Mammary epithelial cell (primary cell): ENCODE measurements at regions of chr19 and their contacts with region 1.

Region 1: DNA sequence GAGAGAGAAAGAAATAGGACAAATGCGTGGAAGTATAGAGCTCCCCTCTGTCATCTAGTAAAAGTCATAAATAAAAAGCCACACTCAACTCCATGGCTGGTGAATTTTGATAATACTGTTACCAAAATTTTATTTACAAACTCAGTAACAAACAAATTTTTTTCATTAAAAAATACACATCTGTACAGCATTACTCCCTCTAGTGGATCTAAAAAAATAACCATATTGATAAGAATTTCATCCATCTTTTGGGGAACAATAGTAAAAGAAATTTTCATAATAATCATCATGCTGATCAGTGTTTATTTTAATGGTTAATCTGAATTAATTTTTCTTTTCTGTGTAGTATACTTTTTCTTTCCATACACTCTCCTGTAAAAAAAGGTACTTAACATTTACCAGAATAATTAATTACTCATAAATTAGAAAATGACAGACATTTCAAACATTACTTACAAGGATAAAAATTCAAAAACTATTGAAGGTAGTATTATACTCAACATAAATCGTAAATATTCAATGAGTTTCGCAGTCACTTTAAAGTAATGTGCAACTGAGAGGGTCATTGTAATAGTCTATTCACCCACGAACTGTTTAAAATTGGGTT is 173.5 kb upstream of the LSM14A start:
- DNase-seq: no peak
- H3K4me3 ChIP-seq: no peak overlapping the region
- H3K27ac ChIP-seq: no peak overlapping the region
- H3K4me1 ChIP-seq: no peaks in the 10 kb centered on the region
- H3K27me3 ChIP-seq: no peaks in the 10 kb centered on the region
- CTCF ChIP-seq: peak; percentile 21 to 41

Region 2: DNA sequence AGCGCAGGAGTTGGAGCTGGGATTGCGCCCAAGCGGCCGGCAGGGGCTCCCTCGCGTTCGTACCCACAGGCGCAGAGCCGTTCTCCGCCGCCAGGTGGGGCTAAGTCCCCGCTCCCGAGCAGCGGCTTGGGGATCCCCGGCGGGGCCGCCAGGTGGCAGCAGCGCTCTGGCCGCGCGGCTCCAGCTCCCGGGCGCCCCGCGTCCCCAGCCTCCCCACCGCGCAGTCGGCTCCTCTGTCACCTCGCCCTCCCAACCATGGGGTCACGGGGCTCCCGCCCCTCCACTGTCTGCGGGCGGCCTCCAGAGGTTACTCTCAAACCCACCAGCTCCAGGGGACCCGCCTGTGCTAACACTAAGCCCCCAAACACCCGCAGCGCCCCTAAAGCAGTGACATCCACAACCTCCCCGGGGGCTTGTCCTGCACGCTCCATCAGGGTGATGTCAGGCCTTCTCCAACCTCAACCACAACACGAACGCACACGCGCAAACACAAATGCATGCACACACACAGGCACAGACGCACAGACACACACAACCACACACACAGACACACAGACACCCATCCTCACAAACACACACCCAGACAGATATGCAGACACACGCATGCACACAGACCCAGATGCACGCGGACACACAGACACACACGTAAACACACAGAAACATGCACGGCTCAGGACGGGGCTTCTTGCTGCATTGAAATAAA is 220.6 kb before region 1 on chr19:
- CTCF ChIA-PET with region 1: interaction called, 9 read pairs
- dilution Hi-C with region 1: no loop called
- in situ Hi-C with region 1: loop called (anchors 5 kb)
- intact Hi-C with region 1: loop called (anchors 1 kb)
- DNase-seq: peak; percentile 52
- H3K4me3 ChIP-seq: peak overlapping the region in 1 of 3 experiments; percentile 14
- H3K27ac ChIP-seq: no peak overlapping the region
- H3K4me1 ChIP-seq: peaks cover 10% of the 10 kb centered on the region
- H3K27me3 ChIP-seq: no peaks in the 10 kb centered on the region
- CTCF ChIP-seq: peak; percentile 99 to 100

Region 3: GRCh38 chr19:33795370-33796163 is 203.3 kb before region 1 on chr19:
- CTCF ChIA-PET with region 1: interaction called, 11 read pairs
- dilution Hi-C with region 1: no loop called
- in situ Hi-C with region 1: no loop called
- intact Hi-C with region 1: loop called (anchors 1 kb)
- DNase-seq: peak; percentile 75
- H3K4me3 ChIP-seq: peak overlapping the region; percentile 71 to 85 (median 81)
- H3K27ac ChIP-seq: peak overlapping the region; percentile 65
- H3K4me1 ChIP-seq: peaks cover 15% of the 10 kb centered on the region
- H3K27me3 ChIP-seq: no peaks in the 10 kb centered on the region
- CTCF ChIP-seq: peak; percentile 38 to 73

Region 4: DNA sequence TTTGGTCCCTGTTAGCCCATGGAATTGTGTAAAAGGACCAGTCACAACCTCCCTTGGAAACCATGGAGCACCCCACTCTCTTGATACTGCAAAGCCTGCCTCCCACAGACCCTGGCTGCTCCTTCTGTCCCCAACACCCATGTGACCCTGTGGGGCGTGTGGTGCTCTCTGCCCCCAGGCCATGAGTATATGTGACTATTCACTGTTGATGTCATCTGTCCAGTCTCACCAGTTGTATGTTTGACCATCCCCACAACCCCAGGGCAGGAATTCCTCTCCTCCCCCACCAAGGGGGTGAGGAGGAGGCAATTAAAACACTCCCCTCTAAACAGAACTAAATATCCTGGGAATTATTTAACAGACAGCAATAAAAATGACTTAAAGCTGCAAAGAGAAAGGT is 167.0 kb before region 1 on chr19:
- CTCF ChIA-PET with region 1: no interaction called
- dilution Hi-C with region 1: loop called (anchors 5 kb)
- in situ Hi-C with region 1: no loop called
- intact Hi-C with region 1: no loop called
- DNase-seq: no peak
- H3K4me3 ChIP-seq: no peak overlapping the region
- H3K27ac ChIP-seq: no peak overlapping the region
- H3K4me1 ChIP-seq: no peaks in the 10 kb centered on the region
- H3K27me3 ChIP-seq: no peaks in the 10 kb centered on the region
- CTCF ChIP-seq: no peak

Region 5: DNA sequence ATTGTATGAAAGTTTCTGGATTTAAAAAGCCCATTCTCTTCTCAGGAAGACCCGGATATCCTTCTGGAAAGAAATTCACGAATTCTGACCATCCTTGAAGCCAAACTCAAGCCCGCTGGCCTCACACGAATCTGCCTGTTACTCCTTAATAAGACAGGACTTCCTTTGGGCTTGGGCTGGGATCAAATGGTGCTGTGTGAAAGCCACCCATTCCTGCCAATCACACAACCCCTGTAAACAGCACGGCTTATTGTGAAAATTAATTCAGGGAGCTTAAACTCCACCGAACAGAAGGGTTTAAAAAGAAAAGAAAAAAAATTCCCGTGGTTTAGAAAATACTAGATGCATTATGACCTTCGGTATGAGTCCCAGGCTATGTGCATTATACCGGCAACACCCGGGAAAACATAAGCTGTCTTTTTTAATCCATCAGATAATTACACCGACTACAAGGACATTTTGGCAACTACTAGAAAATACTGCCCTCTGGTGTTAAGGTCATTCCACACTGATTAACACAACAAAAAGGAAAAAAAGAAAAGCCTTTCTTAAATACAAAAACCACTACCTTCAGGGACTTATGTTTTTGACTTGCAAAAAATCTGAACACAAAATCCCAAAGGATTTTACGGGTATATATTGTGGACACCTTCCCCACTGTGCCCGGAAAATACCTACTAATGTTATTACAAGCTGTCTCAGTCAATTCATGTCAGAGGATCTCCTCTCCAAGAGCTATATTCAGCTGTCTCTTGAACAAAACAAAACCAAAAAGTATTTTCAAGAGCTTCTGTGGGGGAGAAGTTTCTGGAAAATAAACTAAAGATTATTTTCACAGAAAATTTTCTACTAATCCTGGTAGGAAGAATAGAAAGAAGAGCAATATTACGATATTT is 97.4 kb after region 1 on chr19:
- CTCF ChIA-PET with region 1: no interaction called
- dilution Hi-C with region 1: no loop called
- in situ Hi-C with region 1: loop called in 1 of 2 experiments (anchors 10 kb)
- intact Hi-C with region 1: loop called (anchors 5 kb)
- DNase-seq: peak; percentile 18
- H3K4me3 ChIP-seq: no peak overlapping the region
- H3K27ac ChIP-seq: no peak overlapping the region
- H3K4me1 ChIP-seq: no peaks in the 10 kb centered on the region
- H3K27me3 ChIP-seq: no peaks in the 10 kb centered on the region
- CTCF ChIP-seq: peak; percentile 59 to 63

Region 6: DNA sequence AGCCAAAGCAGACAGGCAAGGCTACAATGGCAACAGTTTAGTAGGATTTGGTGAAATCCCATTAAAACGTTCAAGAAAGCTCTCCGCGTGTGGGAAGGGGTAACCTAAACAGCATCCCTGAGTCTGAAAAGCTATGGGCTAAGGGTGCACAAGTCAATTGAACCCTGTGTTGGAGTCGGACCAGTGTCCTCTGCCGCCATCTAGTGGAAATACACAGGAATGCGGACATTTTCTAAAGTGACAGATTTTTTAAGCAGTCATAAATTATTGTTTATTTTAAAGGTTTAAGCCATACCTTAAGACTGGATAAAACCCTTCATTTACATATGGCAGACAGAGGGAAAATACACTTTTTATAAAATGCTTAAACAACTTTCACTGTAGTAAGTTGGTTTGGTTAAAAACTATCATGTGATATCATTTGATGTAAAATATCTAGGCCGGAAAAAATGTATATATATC is 146.9 kb after region 1 on chr19:
- CTCF ChIA-PET with region 1: interaction called, 3 read pairs
- dilution Hi-C with region 1: no loop called
- in situ Hi-C with region 1: no loop called
- intact Hi-C with region 1: loop called (anchors 1 kb)
- DNase-seq: peak; percentile 30
- H3K4me3 ChIP-seq: no peak overlapping the region
- H3K27ac ChIP-seq: no peak overlapping the region
- H3K4me1 ChIP-seq: no peaks in the 10 kb centered on the region
- H3K27me3 ChIP-seq: no peaks in the 10 kb centered on the region
- CTCF ChIP-seq: peak; percentile 83 to 88